Ovary (tissue), 10 donors: ENCODE measurements at regions of chr3 and their contacts with region 1.

Region 1: DNA sequence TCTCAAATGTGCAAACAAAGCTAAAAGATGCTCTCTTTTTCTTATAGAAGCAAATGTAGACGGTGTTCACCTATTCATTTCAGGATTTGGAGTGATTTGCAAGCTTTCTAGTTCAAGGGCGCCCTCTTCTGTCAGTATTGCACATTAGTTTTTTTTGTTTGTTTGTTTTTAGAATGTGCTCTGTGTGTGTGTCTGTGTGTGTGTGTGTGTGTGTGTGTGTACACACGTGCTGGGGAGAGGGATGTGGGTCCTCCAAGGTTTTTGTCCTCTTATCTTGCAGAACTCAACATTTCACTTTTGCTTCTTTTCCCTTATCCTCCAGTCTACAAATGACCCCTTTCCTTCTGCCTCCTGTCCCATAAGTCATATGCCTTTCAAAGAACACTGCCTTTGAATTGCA is 23.5 kb downstream of the DNAH1 start:
- DNase-seq: peak in 2 of 5 donors; percentile 42 to 55
- H3K4me3 ChIP-seq: no peak overlapping the region
- H3K27ac ChIP-seq: no peak overlapping the region
- H3K4me1 ChIP-seq: peaks cover 1% of the 10 kb centered on the region
- H3K27me3 ChIP-seq: no peaks in the 10 kb centered on the region
- CTCF ChIP-seq: peak; percentile 50 to 75 (median 68)
- EP300 ChIP-seq: no peak
- POLR2A ChIP-seq: no peak

Region 2: GRCh38 chr3:52291508-52292181 is 48.0 kb before region 1 on chr3:
- intact Hi-C with region 1: loop called in 3 of 4 experiments (anchors 5 kb)
- DNase-seq: peak in 4 of 5 donors; percentile 43 to 63 (median 58)
- H3K4me3 ChIP-seq: no peak overlapping the region
- H3K27ac ChIP-seq: no peak overlapping the region
- H3K4me1 ChIP-seq: peaks cover 2% of the 10 kb centered on the region
- H3K27me3 ChIP-seq: no peaks in the 10 kb centered on the region
- CTCF ChIP-seq: peak in 1 of 3 donors; percentile 39
- EP300 ChIP-seq: no peak
- POLR2A ChIP-seq: no peak

Region 3: DNA sequence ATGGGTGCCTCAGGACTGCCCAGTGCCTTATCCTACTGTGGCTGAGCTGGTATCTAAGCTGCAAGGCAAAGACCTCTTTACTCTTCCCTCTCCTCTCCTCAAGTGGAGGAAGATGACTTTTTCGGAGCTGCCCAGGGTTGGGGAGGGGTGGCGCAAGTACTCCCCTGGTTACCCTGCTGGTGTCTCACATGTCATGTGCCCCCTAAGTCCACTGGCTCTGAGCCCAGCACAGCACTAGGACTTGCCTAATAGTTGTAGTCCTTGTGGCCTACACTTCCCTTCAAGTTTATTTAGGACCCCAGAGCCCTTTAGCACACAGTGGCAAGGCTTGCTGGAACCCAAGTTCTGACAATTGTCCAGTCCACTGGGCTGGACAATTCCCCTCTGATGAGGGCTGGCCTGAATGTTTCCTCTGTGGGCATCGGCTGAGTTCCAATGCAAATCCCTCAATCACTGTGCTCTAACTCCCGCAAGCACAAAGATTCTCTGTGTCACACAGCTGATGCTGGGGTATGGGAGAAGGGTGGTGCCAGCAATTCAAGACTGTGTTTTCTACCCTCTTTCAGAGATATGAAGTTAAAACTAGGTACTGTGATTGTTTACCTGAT is 257.1 kb after region 1 on chr3:
- intact Hi-C with region 1: no loop called
- DNase-seq: no peak
- H3K4me3 ChIP-seq: no peak overlapping the region
- H3K27ac ChIP-seq: no peak overlapping the region
- H3K4me1 ChIP-seq: no peaks in the 10 kb centered on the region
- H3K27me3 ChIP-seq: no peaks in the 10 kb centered on the region
- CTCF ChIP-seq: no peak
- EP300 ChIP-seq: no peak
- POLR2A ChIP-seq: no peak